Body of pancreas (tissue), 4 donors: ENCODE measurements at regions of chr17 and their contacts with region 1.

Region 1: GRCh38 chr17:44159519-44160210 is 10.8 kb upstream of the ASB16 start:
- DNase-seq: no peak
- ATAC-seq: no peak
- H3K4me3 ChIP-seq: no peak overlapping the region
- H3K27ac ChIP-seq: no peak overlapping the region
- H3K4me1 ChIP-seq: no peaks in the 10 kb centered on the region
- H3K27me3 ChIP-seq: no peaks in the 10 kb centered on the region
- CTCF ChIP-seq: no peak
- POLR2A ChIP-seq: no peak

Region 2: GRCh38 chr17:43891851-43892646 is 267.6 kb before region 1 on chr17:
- intact Hi-C with region 1: loop called (anchors 10 kb)
- DNase-seq: peak in 2 of 4 donors; percentile 57 to 76
- ATAC-seq: peak; percentile 59
- H3K4me3 ChIP-seq: no peak overlapping the region
- H3K27ac ChIP-seq: no peak overlapping the region
- H3K4me1 ChIP-seq: no peaks in the 10 kb centered on the region
- H3K27me3 ChIP-seq: no peaks in the 10 kb centered on the region
- CTCF ChIP-seq: no peak
- POLR2A ChIP-seq: no peak

Region 3: GRCh38 chr17:44297975-44298374 is 138.3 kb after region 1 on chr17:
- intact Hi-C with region 1: no loop called
- DNase-seq: no peak
- ATAC-seq: no peak
- H3K4me3 ChIP-seq: no peak overlapping the region
- H3K27ac ChIP-seq: no peak overlapping the region
- H3K4me1 ChIP-seq: no peaks in the 10 kb centered on the region
- H3K27me3 ChIP-seq: no peaks in the 10 kb centered on the region
- CTCF ChIP-seq: no peak
- POLR2A ChIP-seq: no peak